ENCODE measurements at regions of chr17 and their contacts with region 1.

Region 1: GRCh38 chr17:58421711-58422110 is 4.4 kb upstream of the RNF43 start:
- DNase-seq: no peak
- ATAC-seq: no peak
- H3K4me3 ChIP-seq: no peak overlapping the region
- H3K27ac ChIP-seq: no peak overlapping the region
- H3K4me1 ChIP-seq: peaks cover 0 to under 1% (median 0%) of the 10 kb centered on the region in 4 donors
- H3K27me3 ChIP-seq: no peaks in the 10 kb centered on the region
- CTCF ChIP-seq: no peak
- POLR2A ChIP-seq: no peak

Region 2: DNA sequence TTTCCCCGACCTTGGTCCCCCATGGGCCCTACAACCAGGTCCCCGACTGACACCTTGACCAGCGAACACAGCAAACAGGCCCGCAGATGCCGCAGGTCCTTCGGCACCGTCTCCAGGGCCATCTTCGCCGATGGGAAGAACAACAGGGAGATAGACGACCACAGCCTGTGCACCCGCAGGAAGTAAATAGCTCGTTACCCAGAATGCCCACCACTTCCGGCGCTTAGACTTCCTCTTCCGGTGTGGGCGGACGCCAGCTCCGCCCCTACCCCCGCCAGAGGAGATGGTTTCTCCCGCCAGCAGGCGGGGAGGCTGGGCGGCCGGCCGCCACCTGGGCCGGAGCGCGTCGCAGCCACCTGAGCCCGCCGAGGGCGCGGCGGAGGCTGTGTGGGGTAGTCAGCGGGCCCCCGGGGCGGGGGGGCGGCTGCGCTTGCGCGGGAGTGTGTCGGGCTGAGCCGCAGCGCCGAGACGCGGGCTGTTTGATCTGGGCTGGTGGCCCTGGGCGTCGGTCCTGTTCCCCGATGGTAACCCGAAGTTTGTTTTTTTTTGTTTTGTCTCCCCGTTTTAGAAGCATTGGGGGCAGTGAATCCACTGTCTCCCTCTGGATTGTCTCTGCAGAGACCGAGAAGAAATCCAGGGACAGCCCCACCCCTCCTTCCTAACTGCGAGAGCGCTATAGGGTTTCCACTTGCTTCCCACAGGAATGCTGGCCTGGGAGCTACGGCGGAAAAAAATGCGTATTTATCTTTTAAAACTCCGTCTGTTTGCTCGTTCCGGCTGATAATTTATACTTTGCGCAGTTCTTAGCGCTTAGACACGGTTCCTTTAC is 69.5 kb before region 1 on chr17 and contains the start of gene SUPT4H1:
- intact Hi-C with region 1: loop called in 1 of 2 experiments (anchors 10 kb)
- DNase-seq: peak; percentile 90 to 93 (median 93)
- ATAC-seq: peak; percentile 95 to 97 (median 96)
- H3K4me3 ChIP-seq: peak within 1 kb of the TSS; percentile 83 to 97 (median 88)
- H3K27ac ChIP-seq: peak within 1 kb of the TSS; percentile 83 to 95 (median 95)
- H3K4me1 ChIP-seq: peaks cover 0 to 8% (median 2%) of the 10 kb centered on the region in 4 donors
- H3K27me3 ChIP-seq: no peaks in the 10 kb centered on the region
- CTCF ChIP-seq: peak in 2 of 4 donors; percentile 5 to 24
- POLR2A ChIP-seq: peak; percentile 91
- total RNA-seq, gene SUPT4H1: 24.8 to 50.9 (median 37.0) TPM

Region 3: DNA sequence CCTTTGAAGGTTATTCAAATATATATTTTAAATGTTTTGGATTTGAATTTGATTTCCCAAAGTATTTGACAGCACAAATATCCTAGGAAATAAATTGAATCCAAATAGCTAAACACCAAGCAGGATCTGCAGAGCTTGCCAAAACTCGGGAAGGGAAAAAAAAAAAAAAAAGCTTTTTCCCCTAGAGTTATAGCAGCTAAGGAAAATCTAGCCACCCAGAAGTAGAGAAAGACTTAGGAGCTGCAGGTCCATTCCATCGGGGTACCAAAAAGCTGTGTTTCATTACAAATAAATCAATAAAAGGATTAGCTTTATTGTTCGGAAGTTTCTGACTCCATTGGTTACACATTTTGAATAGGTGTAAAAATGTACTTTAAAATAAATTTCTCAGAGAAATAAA is 47.2 kb after region 1 on chr17:
- intact Hi-C with region 1: no loop called
- DNase-seq: no peak
- ATAC-seq: no peak
- H3K4me3 ChIP-seq: no peak overlapping the region
- H3K27ac ChIP-seq: no peak overlapping the region
- H3K4me1 ChIP-seq: no peaks in the 10 kb centered on the region
- H3K27me3 ChIP-seq: no peaks in the 10 kb centered on the region
- CTCF ChIP-seq: no peak
- POLR2A ChIP-seq: no peak

Measured in right lobe of liver (tissue), 6 donors.